CD14-positive monocyte (primary cell): ENCODE measurements at regions of chr5 and their contacts with region 1.

Region 1: GRCh38 chr5:179516221-179516620 is 34.1 kb upstream of the RUFY1 start:
- DNase-seq: no peak
- H3K4me3 ChIP-seq: no peak overlapping the region
- H3K4me3 Mint-ChIP-seq: no peak overlapping the region
- H3K27ac ChIP-seq: no peak overlapping the region
- H3K27ac Mint-ChIP-seq: no peak overlapping the region
- H3K4me1 ChIP-seq: peaks cover 2 to 7% of the 10 kb centered on the region in 2 donors
- H3K4me1 Mint-ChIP-seq: peaks cover 7% of the 10 kb centered on the region
- H3K27me3 ChIP-seq: no peaks in the 10 kb centered on the region
- H3K27me3 Mint-ChIP-seq: peaks cover 0 to 5% (median 2%) of the 10 kb centered on the region in 3 donors
- CTCF ChIP-seq: no peak

Region 2: DNA sequence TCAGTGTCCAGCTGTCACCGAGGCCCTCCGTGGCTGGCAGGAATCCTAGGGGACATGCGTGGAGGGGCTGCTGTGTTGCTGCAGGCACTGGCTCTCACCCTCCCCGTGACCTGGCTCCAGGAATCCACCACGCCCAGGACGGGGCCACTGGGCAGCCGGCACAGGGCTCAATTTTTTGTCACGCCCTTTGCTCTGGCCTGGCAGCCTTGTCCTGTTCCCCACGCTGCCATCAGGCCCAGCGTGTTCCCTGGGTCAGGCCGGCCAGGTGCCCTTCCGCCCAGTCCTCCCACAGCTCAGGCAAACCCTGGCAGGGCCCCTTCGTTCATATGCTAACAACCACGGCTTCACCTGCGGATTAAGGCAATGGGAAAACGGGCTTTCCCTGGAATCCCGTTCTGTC is 1557.5 kb before region 1 on chr5:
- intact Hi-C with region 1: loop called in 1 of 2 experiments (anchors 10 kb)
- DNase-seq: no peak
- H3K4me3 ChIP-seq: no peak overlapping the region
- H3K4me3 Mint-ChIP-seq: no peak overlapping the region
- H3K27ac ChIP-seq: no peak overlapping the region
- H3K27ac Mint-ChIP-seq: no peak overlapping the region
- H3K4me1 ChIP-seq: no peaks in the 10 kb centered on the region
- H3K4me1 Mint-ChIP-seq: no peaks in the 10 kb centered on the region
- H3K27me3 ChIP-seq: no peaks in the 10 kb centered on the region
- H3K27me3 Mint-ChIP-seq: peaks cover 2 to 4% (median 3%) of the 10 kb centered on the region in 3 donors
- CTCF ChIP-seq: no peak

Region 3: GRCh38 chr5:179470201-179470600 is 46.0 kb before region 1 on chr5:
- intact Hi-C with region 1: no loop called
- DNase-seq: no peak
- H3K4me3 ChIP-seq: no peak overlapping the region
- H3K4me3 Mint-ChIP-seq: no peak overlapping the region
- H3K27ac ChIP-seq: no peak overlapping the region
- H3K27ac Mint-ChIP-seq: no peak overlapping the region
- H3K4me1 ChIP-seq: peaks cover 2% of the 10 kb centered on the region in 2 donors
- H3K4me1 Mint-ChIP-seq: peaks cover 6% of the 10 kb centered on the region
- H3K27me3 ChIP-seq: no peaks in the 10 kb centered on the region
- H3K27me3 Mint-ChIP-seq: peaks cover 3 to 4% (median 3%) of the 10 kb centered on the region in 3 donors
- CTCF ChIP-seq: no peak